ENCODE measurements at regions of chr2 and their contacts with region 1.

Region 1: DNA sequence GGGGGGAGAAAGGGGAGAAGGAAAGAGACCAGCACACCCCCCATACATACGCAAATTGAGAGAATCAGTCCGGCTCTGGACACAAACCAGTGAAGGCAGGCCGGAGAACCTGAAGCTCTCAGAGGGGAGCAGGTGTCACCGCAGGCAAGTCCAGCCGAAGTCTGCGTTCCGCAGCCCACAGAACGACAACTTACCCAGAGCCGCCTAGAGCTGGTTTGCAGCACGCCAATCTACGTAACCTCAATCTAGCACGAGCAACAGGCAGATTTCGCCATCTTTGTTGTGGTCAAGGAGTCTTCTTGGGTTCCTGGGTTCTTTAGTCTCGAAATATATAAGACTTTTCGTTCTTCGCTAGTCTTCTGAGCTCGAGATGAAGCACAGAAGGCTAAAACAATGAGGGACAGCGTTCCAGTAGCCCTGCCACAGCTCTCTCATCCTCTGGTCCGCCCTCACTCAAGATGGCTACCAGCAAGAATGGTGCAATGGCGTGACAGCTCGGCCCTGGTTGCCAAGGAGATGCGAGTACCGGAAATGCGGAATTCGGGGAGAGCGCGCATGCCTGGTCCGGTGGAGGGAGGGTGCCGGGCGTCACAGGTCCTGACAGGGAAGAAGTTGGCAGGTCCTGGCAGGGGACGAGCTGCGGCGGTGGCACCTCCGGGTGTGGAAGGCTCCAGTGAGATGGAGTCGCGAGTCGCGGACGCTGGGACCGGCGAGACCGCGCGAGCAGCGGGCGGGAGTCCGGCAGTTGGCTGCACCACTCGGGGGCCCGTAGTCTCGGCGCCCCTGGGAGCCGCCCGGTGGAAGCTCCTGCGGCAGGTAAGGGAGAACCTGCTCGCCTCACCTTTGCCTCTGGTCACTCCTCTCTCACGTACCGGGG is at the starts of genes CAMKMT and PREPL:
- DNase-seq: peak; percentile 98
- H3K4me3 ChIP-seq: peak within 1 kb of the TSS; percentile 80 to 88
- H3K27ac ChIP-seq: peak within 1 kb of the TSS; percentile 98
- H3K4me1 ChIP-seq: no peaks in the 10 kb centered on the region
- H3K27me3 ChIP-seq: no peaks in the 10 kb centered on the region
- CTCF ChIP-seq: peak in 1 of 4 experiments; percentile 18
- POLR2A ChIP-seq: peak; percentile 79
- total RNA-seq, gene CAMKMT: 5.4 to 7.6 TPM
- total RNA-seq, gene PREPL: 40.3 to 49.3 TPM

Region 2: GRCh38 chr2:44167940-44168680 is 193.5 kb before region 1 on chr2:
- intact Hi-C with region 1: loop called (anchors 10 kb)
- DNase-seq: peak; percentile 98
- H3K4me3 ChIP-seq: peak overlapping the region; percentile 43 to 49
- H3K27ac ChIP-seq: peak overlapping the region; percentile 96
- H3K4me1 ChIP-seq: no peaks in the 10 kb centered on the region
- H3K27me3 ChIP-seq: no peaks in the 10 kb centered on the region
- CTCF ChIP-seq: peak in 2 of 4 experiments; percentile 27 to 34
- POLR2A ChIP-seq: peak; percentile 44

Region 3: DNA sequence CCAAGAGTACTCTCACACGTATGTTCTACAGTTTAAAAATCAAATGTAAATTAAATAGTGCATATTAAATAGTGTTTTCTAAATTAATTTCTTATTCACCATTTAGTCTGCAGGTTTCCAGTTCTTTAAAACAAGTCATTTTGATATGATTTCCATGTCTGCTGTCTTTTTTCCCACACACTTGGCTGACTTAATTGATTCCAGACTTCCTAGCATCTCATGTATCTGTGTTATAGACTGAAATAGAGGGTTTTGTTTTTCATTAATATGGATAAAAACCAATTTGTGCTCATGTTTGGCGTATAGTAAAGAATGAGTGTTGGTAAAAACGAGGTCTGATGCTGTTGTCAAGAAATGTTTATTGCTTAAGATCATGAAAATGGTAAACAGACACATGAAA is 1145.2 kb after region 1 on chr2:
- intact Hi-C with region 1: no loop called
- DNase-seq: no peak
- H3K4me3 ChIP-seq: no peak overlapping the region
- H3K27ac ChIP-seq: no peak overlapping the region
- H3K4me1 ChIP-seq: no peaks in the 10 kb centered on the region
- H3K27me3 ChIP-seq: no peaks in the 10 kb centered on the region
- CTCF ChIP-seq: no peak
- POLR2A ChIP-seq: no peak

Measured in prostate gland (tissue), 2 donors.